Activated CD8-positive, alpha-beta T cell treated with anti-CD3 and anti-CD28 coated beads, Interleukin-2, amount 10 ng/mL, durations not matched to agents 7 days and 5 days (primary cell): ENCODE measurements at regions of chr11 and their contacts with region 1.

Region 1: GRCh38 chr11:64778508-64779346 is at the start of gene SF1:
- DNase-seq: peak; percentile 100
- ATAC-seq: peak; percentile 89
- H3K4me3 Mint-ChIP-seq: peak within 1 kb of the TSS; percentile 89
- H3K27ac Mint-ChIP-seq: peak within 1 kb of the TSS; percentile 99
- H3K4me1 Mint-ChIP-seq: peaks cover 57% of the 10 kb centered on the region
- H3K27me3 Mint-ChIP-seq: no peaks in the 10 kb centered on the region
- total RNA-seq, gene SF1: 421 to 423 TPM

Region 2: GRCh38 chr11:64566042-64566914 is 212.4 kb before region 1 on chr11:
- CTCF ChIA-PET with region 1: no interaction called
- POLR2A ChIA-PET with region 1: no interaction called
- DNase-seq: peak; percentile 29
- ATAC-seq: peak; percentile 46
- H3K4me3 Mint-ChIP-seq: no peak overlapping the region
- H3K27ac Mint-ChIP-seq: peak overlapping the region; percentile 26
- H3K4me1 Mint-ChIP-seq: peaks cover 2% of the 10 kb centered on the region
- H3K27me3 Mint-ChIP-seq: no peaks in the 10 kb centered on the region

Region 3: DNA sequence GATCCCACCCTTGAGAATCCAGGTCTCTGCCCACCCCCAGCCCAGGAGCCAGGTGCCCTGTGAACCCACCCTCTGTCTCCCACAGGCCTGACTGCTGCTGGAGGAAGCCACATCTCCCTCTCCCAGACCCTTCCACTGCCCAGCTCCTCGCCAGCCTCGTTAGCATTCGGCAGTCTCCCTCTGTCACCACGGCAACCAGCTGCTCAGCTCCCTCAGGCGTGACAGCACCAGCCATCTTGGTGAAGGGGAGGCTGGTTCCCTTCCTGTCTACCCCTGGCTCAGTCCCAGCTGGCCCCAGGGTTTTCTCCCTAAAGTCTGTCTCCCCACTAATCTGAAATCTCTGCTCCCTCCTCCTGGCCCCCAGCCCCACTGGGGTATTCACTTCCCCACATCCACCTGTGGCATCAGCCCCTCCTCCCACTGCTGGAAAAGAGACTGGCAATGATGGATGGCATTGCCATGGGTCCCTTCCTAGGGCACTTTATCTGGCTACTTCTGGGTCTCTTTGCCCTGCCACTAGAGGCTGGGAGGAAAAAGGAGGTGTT is 83.8 kb before region 1 on chr11:
- CTCF ChIA-PET with region 1: no interaction called
- POLR2A ChIA-PET with region 1: no interaction called
- DNase-seq: no peak
- ATAC-seq: no peak
- H3K4me3 Mint-ChIP-seq: no peak overlapping the region
- H3K27ac Mint-ChIP-seq: no peak overlapping the region
- H3K4me1 Mint-ChIP-seq: peaks cover 8% of the 10 kb centered on the region
- H3K27me3 Mint-ChIP-seq: peaks cover 43% of the 10 kb centered on the region

Region 4: DNA sequence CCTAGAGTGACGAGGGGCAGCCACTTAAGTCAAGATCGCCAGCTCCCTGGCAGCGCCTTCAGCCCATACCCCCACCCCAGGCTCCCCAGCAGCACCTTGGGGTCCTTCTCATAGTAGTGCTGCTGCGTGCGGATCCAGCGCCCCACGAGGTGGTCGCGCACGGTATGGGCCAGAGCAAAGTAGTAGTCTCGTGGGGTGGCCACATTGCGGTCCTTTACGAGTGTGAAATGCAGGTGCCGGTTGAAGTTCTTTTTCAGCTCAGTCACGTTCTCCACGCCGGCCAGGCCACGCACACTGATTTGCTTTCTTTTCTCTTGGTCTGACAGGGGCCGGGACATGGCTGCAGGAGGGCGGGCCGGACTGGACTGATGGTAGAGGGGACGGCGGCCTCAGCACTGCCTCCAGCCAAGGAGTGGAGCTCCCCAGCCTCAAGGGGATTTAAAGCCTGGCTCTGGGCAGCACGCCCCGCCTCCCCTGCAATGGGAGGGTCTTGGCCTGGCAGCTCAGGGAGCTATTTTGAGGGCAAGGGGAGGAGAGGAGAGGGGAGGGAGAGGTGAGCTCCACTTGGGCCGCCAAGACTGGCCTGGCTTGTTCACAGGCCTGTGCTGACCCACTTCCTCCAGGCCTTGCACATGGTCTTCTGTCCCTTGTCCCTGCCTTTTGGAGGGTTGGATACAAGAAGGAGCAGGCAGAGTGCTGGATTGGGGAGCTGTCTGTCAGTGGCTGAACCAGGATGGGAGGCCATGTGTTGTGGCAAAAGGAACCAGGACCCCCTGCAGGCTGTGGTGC is 19.0 kb before region 1 on chr11 and contains the start of gene PYGM:
- CTCF ChIA-PET with region 1: interaction called, 46 read pairs
- POLR2A ChIA-PET with region 1: interaction called, 17 read pairs
- DNase-seq: no peak
- ATAC-seq: no peak
- H3K4me3 Mint-ChIP-seq: peak within 1 kb of the TSS; percentile 63
- H3K27ac Mint-ChIP-seq: peak within 1 kb of the TSS; percentile 86
- H3K4me1 Mint-ChIP-seq: peaks cover 55% of the 10 kb centered on the region
- H3K27me3 Mint-ChIP-seq: no peaks in the 10 kb centered on the region
- total RNA-seq, gene PYGM: 2.9 to 4.7 TPM

Region 5: GRCh38 chr11:64767344-64768299 is 11.1 kb before region 1 on chr11:
- CTCF ChIA-PET with region 1: interaction called, 46 read pairs
- POLR2A ChIA-PET with region 1: interaction called, 17 read pairs
- DNase-seq: peak; percentile 93
- ATAC-seq: peak; percentile 35
- H3K4me3 Mint-ChIP-seq: peak overlapping the region; percentile 35
- H3K27ac Mint-ChIP-seq: peak overlapping the region; percentile 83
- H3K4me1 Mint-ChIP-seq: peaks cover 90% of the 10 kb centered on the region
- H3K27me3 Mint-ChIP-seq: no peaks in the 10 kb centered on the region

Region 6: GRCh38 chr11:64935359-64936081 is 156.8 kb after region 1 on chr11 and contains the start of gene GPHA2:
- CTCF ChIA-PET with region 1: no interaction called
- POLR2A ChIA-PET with region 1: no interaction called
- DNase-seq: no peak
- ATAC-seq: no peak
- H3K4me3 Mint-ChIP-seq: no peak within 1 kb of the TSS
- H3K27ac Mint-ChIP-seq: no peak within 1 kb of the TSS
- H3K4me1 Mint-ChIP-seq: no peaks in the 10 kb centered on the region
- H3K27me3 Mint-ChIP-seq: no peaks in the 10 kb centered on the region
- total RNA-seq, gene GPHA2: not detected